Right lobe of liver (tissue), 6 donors: ENCODE measurements at regions of chr7 and their contacts with region 1.

Region 1: DNA sequence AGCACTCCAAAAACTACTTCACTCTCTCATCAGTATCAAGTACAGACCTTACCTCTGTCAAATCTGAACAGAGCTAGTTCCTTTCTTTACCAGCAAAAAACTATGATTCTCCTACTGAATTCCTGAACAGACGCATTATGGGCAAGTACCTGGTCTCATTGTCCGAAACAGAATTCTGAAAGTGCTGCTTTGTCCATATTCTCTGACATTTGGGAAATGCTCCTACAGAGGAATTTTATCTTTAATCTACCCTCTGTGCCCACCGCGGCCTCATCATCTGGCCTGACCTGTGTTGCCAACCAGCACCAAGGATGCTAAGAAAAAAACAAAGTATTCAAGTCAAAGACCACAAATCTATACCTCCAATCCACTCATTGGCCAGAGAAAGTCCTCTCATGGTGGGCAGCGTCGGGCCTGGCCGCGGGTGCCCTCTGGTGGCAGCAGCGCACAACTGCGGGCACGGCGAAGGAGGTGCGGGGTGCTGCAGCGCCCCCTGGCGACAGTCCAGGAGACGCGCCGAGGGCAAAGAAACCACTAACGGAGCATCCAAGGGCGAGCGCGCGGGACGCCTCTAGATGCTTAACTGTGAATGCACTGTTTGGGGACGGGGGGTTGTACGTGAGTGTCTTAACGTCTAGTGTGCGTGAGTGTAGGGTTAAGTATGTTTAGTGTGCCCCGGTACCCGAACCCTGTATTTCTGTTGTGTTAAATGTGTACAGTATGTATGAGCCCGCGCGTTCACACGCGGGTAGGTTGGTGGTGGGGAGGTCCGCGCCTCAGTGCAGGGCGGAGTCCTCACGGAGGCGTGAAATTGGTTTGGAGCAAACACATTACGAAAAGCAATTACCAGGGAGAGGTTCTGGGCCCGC is 5.0 kb upstream of the GBX1 start:
- DNase-seq: peak; percentile 82 to 86 (median 83)
- ATAC-seq: peak; percentile 92 to 99 (median 97)
- H3K4me3 ChIP-seq: no peak overlapping the region
- H3K27ac ChIP-seq: no peak overlapping the region
- H3K4me1 ChIP-seq: peaks cover 0 to 8% (median 2%) of the 10 kb centered on the region in 4 donors
- H3K27me3 ChIP-seq: peaks cover 4 to 10% of the 10 kb centered on the region in 2 donors
- CTCF ChIP-seq: peak in 3 of 4 donors; percentile 100
- POLR2A ChIP-seq: no peak

Region 2: DNA sequence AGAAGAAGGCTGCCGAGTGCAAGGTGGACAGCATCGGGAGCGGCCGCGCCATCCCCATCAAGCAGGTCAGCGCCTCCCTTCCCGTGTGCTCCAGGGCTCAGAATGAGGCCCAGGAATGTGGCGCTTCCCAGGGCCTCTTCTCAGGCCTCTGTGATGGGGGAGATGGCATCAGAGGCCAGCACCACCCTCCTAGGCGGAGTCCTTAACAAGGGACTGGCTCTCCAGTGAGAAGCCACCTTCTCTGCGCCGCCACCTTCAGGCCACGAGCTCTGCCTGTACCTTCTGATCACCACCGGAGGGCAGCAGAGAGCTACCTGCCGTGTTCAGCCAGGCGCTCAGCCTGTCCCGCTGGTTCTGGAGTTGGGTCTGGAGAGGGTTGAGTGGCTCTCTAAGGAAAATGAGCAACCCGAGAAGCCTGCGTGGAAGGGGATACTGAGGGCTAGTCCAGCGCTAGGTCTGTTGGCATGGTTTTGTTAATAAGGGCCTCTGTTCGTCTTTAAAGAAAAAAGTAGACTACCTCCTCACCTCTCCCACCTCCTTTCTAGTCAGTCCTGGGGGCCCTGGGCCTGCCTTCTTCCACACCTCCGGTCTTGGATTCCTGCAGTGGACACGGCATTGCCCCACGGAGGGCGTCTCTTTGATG is 48.6 kb before region 1 on chr7:
- intact Hi-C with region 1: loop called in 1 of 2 experiments (anchors 10 kb)
- DNase-seq: peak; percentile 81 to 85 (median 82)
- ATAC-seq: peak; percentile 88 to 97 (median 94)
- H3K4me3 ChIP-seq: no peak overlapping the region
- H3K27ac ChIP-seq: no peak overlapping the region
- H3K4me1 ChIP-seq: no peaks in the 10 kb centered on the region
- H3K27me3 ChIP-seq: no peaks in the 10 kb centered on the region
- CTCF ChIP-seq: peak; percentile 88 to 99 (median 98)
- POLR2A ChIP-seq: no peak

Region 3: GRCh38 chr7:151286148-151286547 is 113.6 kb after region 1 on chr7:
- intact Hi-C with region 1: no loop called
- DNase-seq: no peak
- ATAC-seq: no peak
- H3K4me3 ChIP-seq: no peak overlapping the region
- H3K27ac ChIP-seq: no peak overlapping the region
- H3K4me1 ChIP-seq: no peaks in the 10 kb centered on the region
- H3K27me3 ChIP-seq: no peaks in the 10 kb centered on the region
- CTCF ChIP-seq: no peak
- POLR2A ChIP-seq: no peak